ENCODE measurements at regions of chr3 and their contacts with region 1.

Region 1: GRCh38 chr3:127750226-127751031 is 71.9 kb downstream of the MGLL start:
- DNase-seq: no peak
- ATAC-seq: no peak
- H3K4me3 ChIP-seq: no peak overlapping the region
- H3K27ac ChIP-seq: peak overlapping the region; percentile 31 to 94 (median 84)
- H3K4me1 ChIP-seq: peaks cover 21 to 95% (median 66%) of the 10 kb centered on the region in 9 donors
- H3K27me3 ChIP-seq: no peaks in the 10 kb centered on the region
- CTCF ChIP-seq: no peak

Region 2: GRCh38 chr3:127304121-127304744 is 446.2 kb before region 1 on chr3:
- intact Hi-C with region 1: no loop called
- DNase-seq: no peak
- ATAC-seq: peak in 3 of 8 donors; percentile 25 to 50 (median 44)
- H3K4me3 ChIP-seq: no peak overlapping the region
- H3K27ac ChIP-seq: no peak overlapping the region
- H3K4me1 ChIP-seq: peaks cover 0 to 26% (median 0%) of the 10 kb centered on the region in 9 donors
- H3K27me3 ChIP-seq: peaks cover 0 to 40% (median 27%) of the 10 kb centered on the region in 7 donors
- CTCF ChIP-seq: no peak

Region 3: GRCh38 chr3:127710155-127710941 is 40.1 kb before region 1 on chr3:
- intact Hi-C with region 1: loop called in 1 of 10 experiments (anchors 5 kb)
- DNase-seq: no peak
- ATAC-seq: no peak
- H3K4me3 ChIP-seq: no peak overlapping the region
- H3K27ac ChIP-seq: peak overlapping the region in 9 of 10 donors; percentile 58 to 99 (median 82)
- H3K4me1 ChIP-seq: peaks cover 14 to 99% (median 77%) of the 10 kb centered on the region in 9 donors
- H3K27me3 ChIP-seq: no peaks in the 10 kb centered on the region
- CTCF ChIP-seq: no peak

Region 4: GRCh38 chr3:127786353-127787070 is 36.1 kb after region 1 on chr3:
- intact Hi-C with region 1: loop called in 1 of 10 experiments (anchors 5 kb)
- DNase-seq: peak; percentile 85 to 87
- ATAC-seq: peak; percentile 76 to 87 (median 84)
- H3K4me3 ChIP-seq: no peak overlapping the region
- H3K27ac ChIP-seq: peak overlapping the region; percentile 21 to 91 (median 64)
- H3K4me1 ChIP-seq: peaks cover 37 to 99% (median 80%) of the 10 kb centered on the region in 9 donors
- H3K27me3 ChIP-seq: no peaks in the 10 kb centered on the region
- CTCF ChIP-seq: no peak

Region 5: DNA sequence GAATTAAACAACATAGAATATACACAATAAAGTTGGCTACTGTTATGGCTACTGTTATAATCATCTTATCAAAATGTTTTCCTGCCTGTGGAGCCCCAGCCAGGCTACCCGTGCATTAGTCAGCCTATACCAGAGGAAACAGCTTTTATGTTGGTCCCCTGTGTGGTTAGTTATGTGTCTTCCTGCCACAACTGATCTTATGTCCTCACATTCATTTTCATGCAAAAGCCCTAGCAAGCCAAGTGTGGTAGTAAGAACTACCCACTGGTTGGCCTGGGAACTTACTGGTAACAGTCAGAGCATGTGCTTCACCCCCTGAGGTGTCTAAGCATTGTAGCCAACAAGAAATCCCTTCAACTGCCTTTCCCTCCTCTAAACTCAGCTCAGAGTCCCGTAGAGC is 50.1 kb after region 1 on chr3:
- intact Hi-C with region 1: no loop called
- DNase-seq: no peak
- ATAC-seq: no peak
- H3K4me3 ChIP-seq: no peak overlapping the region
- H3K27ac ChIP-seq: peak overlapping the region in 6 of 10 donors; percentile 3 to 61 (median 34)
- H3K4me1 ChIP-seq: peaks cover 3 to 89% (median 49%) of the 10 kb centered on the region in 9 donors
- H3K27me3 ChIP-seq: no peaks in the 10 kb centered on the region
- CTCF ChIP-seq: no peak

Region 6: DNA sequence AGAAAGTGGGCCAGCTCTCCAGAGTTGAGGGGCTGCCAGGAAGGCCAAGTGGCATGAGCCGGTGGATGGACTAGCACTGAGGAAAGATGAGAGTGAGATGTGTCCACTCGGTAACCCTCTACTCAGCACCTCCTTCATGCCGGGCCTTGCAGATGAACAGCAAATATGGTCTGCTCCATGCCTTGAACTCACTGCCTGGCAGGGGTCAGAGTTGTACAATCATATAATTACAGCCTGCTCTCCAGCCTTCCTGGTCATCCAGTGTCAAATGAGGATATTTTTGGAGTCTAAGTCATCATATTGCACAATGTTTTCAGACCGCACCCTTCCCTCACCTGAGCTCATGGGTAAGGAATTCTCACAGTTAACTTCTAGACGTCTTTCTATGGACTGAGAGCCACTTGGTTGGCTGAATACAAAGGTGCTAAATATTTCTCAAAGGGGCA is 67.0 kb after region 1 on chr3:
- intact Hi-C with region 1: loop called in 7 of 10 experiments (anchors 2 to 10 kb)
- DNase-seq: no peak
- ATAC-seq: peak; percentile 3 to 74 (median 48)
- H3K4me3 ChIP-seq: peak overlapping the region in 4 of 10 donors; percentile 0 to 66 (median 7)
- H3K27ac ChIP-seq: peak overlapping the region; percentile 18 to 98 (median 80)
- H3K4me1 ChIP-seq: peaks cover 29 to 91% (median 68%) of the 10 kb centered on the region in 9 donors
- H3K27me3 ChIP-seq: no peaks in the 10 kb centered on the region
- CTCF ChIP-seq: no peak